OCI-LY7 (cell line): ENCODE measurements at regions of chr2 and their contacts with region 1.

Region 1: DNA sequence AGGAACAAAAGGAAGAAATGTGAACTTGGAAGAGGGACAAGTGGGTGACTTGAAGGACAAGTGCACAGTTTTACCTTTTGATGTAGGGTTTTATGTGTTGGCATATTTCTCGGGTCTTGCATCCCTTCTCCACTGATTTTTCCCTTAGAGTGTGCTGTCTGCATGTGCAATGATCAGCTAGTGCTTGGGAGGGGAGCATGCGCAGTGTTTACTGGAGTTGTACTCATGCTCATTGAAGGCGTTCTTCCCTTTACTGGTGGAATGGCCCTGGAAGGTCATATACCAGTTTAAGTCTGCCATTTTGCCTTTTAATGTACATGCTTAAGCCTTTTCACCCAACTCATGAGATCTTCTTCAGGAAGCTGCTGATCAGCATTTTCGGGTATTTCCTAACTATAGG is 1168.0 kb downstream of the SUCLG1 start:
- DNase-seq: no peak
- H3K4me3 ChIP-seq: no peak overlapping the region
- H3K27ac ChIP-seq: no peak overlapping the region
- H3K4me1 ChIP-seq: no peaks in the 10 kb centered on the region
- CTCF ChIP-seq: no peak

Region 2: DNA sequence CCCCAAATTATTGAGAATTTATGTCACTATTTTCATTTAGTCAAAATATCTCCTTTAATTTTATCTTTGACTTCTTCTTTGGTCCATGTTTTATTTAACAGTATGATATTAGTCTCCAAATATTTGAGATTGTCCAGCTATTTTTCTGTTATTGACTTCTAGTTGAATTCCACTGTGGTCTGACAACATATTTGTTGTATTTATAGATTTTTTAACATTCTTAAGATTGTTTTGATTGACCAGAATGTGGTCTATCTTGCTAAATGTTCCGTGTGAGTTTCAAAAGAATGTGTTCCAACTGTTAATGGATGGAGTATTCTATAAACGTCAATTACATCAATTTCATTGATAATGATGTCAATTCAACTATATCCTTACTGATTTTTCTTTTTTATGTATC is 284.1 kb before region 1 on chr2:
- CTCF ChIA-PET with region 1: no interaction called
- POLR2A ChIA-PET with region 1: no interaction called
- intact Hi-C with region 1: no loop called
- DNase-seq: no peak
- H3K4me3 ChIP-seq: no peak overlapping the region
- H3K27ac ChIP-seq: no peak overlapping the region
- H3K4me1 ChIP-seq: no peaks in the 10 kb centered on the region
- CTCF ChIP-seq: no peak

Region 3: DNA sequence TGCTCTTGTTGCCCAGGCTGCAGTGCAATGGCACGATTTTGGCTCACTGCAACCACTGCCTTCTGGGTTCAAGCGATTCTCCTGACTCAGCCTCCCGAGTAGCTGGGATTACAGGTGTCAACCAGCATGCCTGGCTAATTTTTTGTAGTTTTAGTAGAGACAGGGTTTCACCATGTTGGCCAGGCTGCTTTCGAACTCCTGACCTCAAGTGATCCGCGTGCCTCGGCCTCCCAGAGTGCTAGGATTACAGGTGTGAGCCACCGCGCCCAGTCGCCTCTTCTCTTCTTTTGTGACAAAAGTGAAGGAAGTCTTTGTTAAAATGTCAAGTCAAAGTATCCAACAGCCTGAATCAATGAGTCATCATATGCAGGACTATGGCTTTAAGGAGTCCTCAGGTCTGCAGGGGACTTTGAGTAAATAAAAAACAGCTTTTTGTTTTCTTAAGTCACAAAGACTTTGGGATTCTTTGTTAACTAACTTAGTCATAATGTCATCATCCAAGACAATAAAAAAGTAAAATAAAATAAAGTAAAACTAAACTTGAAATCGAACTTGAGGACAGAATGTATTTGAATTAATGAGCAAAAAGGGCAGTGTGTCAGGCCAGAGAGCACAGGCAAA is 14.8 kb after region 1 on chr2:
- CTCF ChIA-PET with region 1: no interaction called
- POLR2A ChIA-PET with region 1: interaction called, 3 read pairs
- intact Hi-C with region 1: loop called (anchors 2 kb)
- DNase-seq: no peak
- H3K4me3 ChIP-seq: no peak overlapping the region
- H3K27ac ChIP-seq: no peak overlapping the region
- H3K4me1 ChIP-seq: no peaks in the 10 kb centered on the region
- CTCF ChIP-seq: no peak

Region 4: DNA sequence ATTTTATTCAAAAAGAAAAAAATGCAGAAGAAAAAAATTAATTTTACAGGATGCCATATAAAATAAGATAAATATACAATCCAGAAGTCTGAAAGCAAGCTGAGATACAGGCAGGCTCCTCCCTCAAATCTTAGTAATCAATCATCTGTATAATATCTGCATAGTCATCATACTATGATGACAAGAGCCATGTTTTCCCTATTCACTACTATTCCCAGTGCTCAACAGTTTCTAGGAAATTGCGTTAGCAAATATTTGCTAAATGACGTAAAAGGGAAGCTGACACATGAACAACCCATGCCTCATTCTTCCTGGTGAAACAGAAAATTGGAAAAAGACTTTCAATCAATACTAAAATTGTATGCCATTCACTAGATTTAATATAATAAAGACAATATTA is 374.8 kb after region 1 on chr2:
- CTCF ChIA-PET with region 1: no interaction called
- POLR2A ChIA-PET with region 1: no interaction called
- intact Hi-C with region 1: no loop called
- DNase-seq: no peak
- H3K4me3 ChIP-seq: no peak overlapping the region
- H3K27ac ChIP-seq: no peak overlapping the region
- H3K4me1 ChIP-seq: no peaks in the 10 kb centered on the region
- CTCF ChIP-seq: no peak